Lower leg skin (tissue), 4 donors: ENCODE measurements at regions of chr20 and their contacts with region 1.

Region 1: GRCh38 chr20:45456632-45457031 is 12.9 kb upstream of the WFDC2 start:
- DNase-seq: no peak
- H3K4me3 ChIP-seq: no peak overlapping the region
- CTCF ChIP-seq: no peak
- POLR2A ChIP-seq: no peak

Region 2: DNA sequence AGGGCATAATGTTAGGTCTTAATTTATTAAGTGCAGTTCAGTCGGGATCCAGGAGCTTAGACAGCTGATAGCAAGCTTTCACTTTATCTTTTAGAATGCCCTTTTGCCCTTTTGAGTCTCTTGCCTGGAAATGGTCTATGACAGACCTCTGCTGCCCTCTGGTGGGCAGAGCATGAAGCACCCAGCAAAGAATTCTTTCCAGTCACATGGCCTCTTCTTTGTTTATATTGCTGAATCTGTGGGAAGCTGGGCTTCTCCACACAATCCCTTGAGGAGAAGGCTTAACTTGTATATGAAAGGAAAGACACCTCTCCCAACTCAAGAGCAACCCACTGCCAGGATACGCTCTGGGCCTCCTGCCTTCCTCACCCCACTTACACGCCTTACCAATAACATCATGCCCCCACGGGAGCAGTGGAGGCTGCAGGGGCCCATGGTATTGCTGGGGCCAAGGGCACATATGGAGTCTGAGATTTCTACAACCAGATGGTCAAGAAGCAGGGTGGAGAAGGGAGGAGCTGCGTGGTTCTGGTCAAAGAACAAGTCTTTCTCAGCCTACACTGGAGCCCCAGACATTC is 314.6 kb after region 1 on chr20:
- intact Hi-C with region 1: loop called (anchors 5 kb)
- DNase-seq: peak; percentile 81 to 95
- H3K4me3 ChIP-seq: no peak overlapping the region
- CTCF ChIP-seq: peak in 1 of 3 donors; percentile 82
- POLR2A ChIP-seq: no peak